ENCODE measurements at regions of chr11 and their contacts with region 1.

Region 1: GRCh38 chr11:3854977-3855807 is at the start of gene STIM1:
- DNase-seq: peak; percentile 98
- ATAC-seq: peak; percentile 74
- H3K4me3 Mint-ChIP-seq: peak within 1 kb of the TSS; percentile 86
- H3K27ac Mint-ChIP-seq: peak within 1 kb of the TSS; percentile 97
- H3K4me1 Mint-ChIP-seq: peaks cover 56% of the 10 kb centered on the region
- H3K27me3 Mint-ChIP-seq: no peaks in the 10 kb centered on the region
- total RNA-seq, gene STIM1: 83.5 to 104 TPM

Region 2: DNA sequence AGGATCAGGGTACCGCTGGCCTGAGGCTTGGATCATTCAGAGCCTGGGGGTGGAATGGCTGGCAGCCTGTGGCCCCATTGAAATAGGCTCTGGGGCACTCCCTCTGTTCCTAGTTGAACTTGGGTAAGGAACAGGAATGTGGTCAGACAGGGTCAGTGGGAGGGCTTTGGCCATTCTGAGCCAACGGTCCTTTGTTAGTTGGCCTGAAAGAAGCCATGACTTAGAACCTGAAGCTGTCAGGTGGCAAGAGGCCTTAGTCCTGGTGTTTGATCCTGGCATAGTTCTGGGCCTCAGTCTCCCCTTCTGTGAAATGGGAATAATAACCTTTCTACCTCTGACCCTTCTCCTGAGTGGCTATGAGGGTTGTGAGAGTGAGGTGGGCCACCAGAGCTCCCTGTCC is 38.5 kb before region 1 on chr11:
- CTCF ChIA-PET with region 1: no interaction called
- DNase-seq: no peak
- ATAC-seq: no peak
- H3K4me3 Mint-ChIP-seq: no peak overlapping the region
- H3K27ac Mint-ChIP-seq: no peak overlapping the region
- H3K4me1 Mint-ChIP-seq: no peaks in the 10 kb centered on the region
- H3K27me3 Mint-ChIP-seq: no peaks in the 10 kb centered on the region

Region 3: DNA sequence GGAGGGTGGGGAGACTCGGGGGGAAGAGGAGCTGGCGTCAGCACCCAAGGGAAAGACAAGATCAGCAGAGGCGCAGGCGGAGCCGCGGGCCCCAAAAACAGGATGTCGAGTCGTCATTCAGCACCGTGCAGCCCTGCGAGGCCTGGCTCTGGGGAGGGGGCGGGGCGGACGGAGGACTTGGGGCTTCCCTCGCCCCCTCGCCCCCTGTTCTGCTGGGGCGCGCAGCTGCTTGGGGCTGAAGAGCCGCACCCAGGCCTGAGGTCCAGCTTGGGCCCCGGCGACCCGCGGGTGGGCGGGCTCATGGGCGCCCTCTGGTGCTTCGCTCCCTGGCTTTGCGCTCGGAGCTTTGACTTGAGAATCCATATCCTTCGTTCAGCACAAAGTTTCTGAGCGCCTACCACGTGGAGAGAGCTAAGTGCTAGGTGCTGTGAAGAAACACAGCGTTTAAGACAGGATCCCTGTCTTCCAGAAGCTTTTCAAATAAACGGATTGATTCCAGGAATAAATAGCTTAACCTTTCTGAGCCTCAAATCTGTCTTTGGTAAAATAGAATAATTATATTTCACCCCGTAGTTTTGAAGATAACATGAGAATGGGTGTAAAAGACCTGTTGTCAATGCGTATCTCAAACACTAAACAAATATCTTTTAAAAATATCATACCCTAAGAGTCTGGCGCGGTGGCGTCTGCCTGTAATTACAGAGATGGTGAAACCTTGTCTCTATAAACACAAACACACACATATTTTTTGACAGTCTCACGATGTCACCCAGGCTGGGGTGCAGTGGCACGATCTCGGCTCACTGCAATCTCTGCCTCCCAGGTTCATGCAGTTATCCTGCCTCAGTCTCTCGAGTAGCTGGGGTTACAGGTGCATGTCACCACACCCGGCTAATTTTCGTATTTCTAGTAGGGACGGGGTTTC is 13.5 kb before region 1 on chr11:
- CTCF ChIA-PET with region 1: interaction called, 311 read pairs
- DNase-seq: peak; percentile 95
- ATAC-seq: peak; percentile 76
- H3K4me3 Mint-ChIP-seq: peak overlapping the region; percentile 92
- H3K27ac Mint-ChIP-seq: peak overlapping the region; percentile 96
- H3K4me1 Mint-ChIP-seq: peaks cover 42% of the 10 kb centered on the region
- H3K27me3 Mint-ChIP-seq: no peaks in the 10 kb centered on the region

Region 4: GRCh38 chr11:3927133-3927796 is 72.1 kb after region 1 on chr11:
- CTCF ChIA-PET with region 1: interaction called, 10 read pairs
- DNase-seq: no peak
- ATAC-seq: no peak
- H3K4me3 Mint-ChIP-seq: no peak overlapping the region
- H3K27ac Mint-ChIP-seq: no peak overlapping the region
- H3K4me1 Mint-ChIP-seq: peaks cover 4% of the 10 kb centered on the region
- H3K27me3 Mint-ChIP-seq: no peaks in the 10 kb centered on the region

Region 5: DNA sequence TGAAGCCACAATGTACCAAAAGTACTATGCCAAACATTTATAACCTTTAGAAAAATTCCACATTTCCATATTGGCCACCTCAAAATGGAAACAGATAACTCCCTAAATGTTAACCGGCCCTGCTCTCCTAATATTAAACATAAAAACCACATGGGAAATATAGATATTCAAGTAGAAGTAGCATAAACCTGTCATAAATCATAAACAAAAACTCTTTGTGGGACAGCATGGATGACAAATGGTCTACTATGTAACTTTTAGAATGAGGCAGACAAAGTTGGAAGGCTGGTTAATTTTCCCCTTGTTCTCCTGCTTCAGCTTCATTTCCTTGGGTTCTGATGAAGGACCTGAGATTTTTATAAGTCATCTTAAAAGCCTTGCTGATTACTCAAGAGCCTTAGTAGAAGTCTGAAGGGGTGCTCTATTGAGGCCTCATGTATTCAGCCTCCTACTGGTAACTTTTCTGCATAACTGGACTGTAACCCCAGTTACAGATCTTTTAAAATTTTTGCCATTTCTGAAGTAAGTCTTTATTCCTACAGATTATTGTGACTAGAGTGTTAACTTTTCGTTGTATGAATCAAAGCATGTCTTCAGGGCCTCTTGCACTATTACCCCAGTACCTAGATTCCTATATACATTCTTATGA is 116.7 kb after region 1 on chr11:
- CTCF ChIA-PET with region 1: interaction called, 41 read pairs
- DNase-seq: no peak
- ATAC-seq: no peak
- H3K4me3 Mint-ChIP-seq: no peak overlapping the region
- H3K27ac Mint-ChIP-seq: no peak overlapping the region
- H3K4me1 Mint-ChIP-seq: peaks cover 52% of the 10 kb centered on the region
- H3K27me3 Mint-ChIP-seq: no peaks in the 10 kb centered on the region

Region 6: GRCh38 chr11:4060182-4060923 is 205.2 kb after region 1 on chr11:
- CTCF ChIA-PET with region 1: interaction called, 474 read pairs
- DNase-seq: no peak
- ATAC-seq: no peak
- H3K4me3 Mint-ChIP-seq: no peak overlapping the region
- H3K27ac Mint-ChIP-seq: no peak overlapping the region
- H3K4me1 Mint-ChIP-seq: peaks cover 27% of the 10 kb centered on the region
- H3K27me3 Mint-ChIP-seq: no peaks in the 10 kb centered on the region

Region 7: DNA sequence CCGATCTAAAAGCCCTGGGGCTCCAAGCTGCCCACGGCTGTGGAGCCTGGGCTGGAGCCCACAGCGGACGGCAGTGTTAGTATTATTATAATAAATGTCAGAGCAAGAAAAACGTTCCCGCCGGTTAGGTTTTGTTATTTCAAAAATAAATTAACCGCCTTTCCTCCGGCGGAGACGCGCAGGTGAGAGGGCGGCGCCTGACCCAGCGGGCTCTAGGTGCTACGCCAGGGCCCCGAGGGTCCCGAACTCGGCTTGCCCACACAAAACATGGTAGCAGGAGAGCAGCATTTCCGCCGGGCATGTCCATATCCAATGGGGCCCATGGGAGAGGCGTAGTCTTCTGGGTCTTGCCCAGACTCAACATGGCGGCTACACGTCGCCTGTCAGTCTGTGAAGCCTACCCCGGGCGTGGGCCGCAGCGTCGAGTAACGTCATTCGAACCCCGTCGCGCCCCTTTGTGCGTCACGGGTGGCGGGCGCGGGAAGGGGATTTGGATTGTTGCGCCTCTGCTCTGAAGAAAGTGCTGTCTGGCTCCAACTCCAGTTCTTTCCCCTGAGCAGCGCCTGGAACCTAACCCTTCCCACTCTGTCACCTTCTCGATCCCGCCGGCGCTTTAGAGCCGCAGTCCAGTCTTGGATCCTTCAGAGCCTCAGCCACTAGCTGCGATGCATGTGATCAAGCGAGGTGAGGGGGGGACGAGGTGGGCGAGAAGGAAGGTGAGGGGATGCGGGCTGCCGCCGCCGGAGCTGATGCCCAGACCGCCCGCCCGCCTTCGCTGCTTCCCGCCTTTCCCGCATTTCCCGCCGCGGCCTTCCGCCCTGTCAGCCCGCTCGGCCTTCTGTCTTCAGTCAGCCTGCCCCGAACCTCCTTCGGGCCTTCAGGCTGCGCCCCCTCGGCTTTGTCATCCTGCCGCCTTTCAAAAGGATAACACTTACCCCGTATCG is 239.4 kb after region 1 on chr11 and contains the start of gene RRM1:
- CTCF ChIA-PET with region 1: interaction called, 13 read pairs
- DNase-seq: peak; percentile 97
- ATAC-seq: peak; percentile 94
- H3K4me3 Mint-ChIP-seq: peak within 1 kb of the TSS; percentile 98
- H3K27ac Mint-ChIP-seq: peak within 1 kb of the TSS; percentile 97
- H3K4me1 Mint-ChIP-seq: peaks cover 77% of the 10 kb centered on the region
- H3K27me3 Mint-ChIP-seq: no peaks in the 10 kb centered on the region
- total RNA-seq, gene RRM1: 166 to 169 TPM

Measured in activated CD8-positive, alpha-beta memory T cell treated with anti-CD3 and anti-CD28 coated beads, Interleukin-2, amount 10 ng/mL, durations not matched to agents 7 days and 5 days (primary cell).